Activated naive CD4-positive, alpha-beta T cell treated with anti-CD3 and anti-CD28 coated beads, Interleukin-2, amount 10 ng/mL, durations not matched to agents 7 days and 5 days (primary cell): ENCODE measurements at regions of chr1 and their contacts with region 1.

Region 1: DNA sequence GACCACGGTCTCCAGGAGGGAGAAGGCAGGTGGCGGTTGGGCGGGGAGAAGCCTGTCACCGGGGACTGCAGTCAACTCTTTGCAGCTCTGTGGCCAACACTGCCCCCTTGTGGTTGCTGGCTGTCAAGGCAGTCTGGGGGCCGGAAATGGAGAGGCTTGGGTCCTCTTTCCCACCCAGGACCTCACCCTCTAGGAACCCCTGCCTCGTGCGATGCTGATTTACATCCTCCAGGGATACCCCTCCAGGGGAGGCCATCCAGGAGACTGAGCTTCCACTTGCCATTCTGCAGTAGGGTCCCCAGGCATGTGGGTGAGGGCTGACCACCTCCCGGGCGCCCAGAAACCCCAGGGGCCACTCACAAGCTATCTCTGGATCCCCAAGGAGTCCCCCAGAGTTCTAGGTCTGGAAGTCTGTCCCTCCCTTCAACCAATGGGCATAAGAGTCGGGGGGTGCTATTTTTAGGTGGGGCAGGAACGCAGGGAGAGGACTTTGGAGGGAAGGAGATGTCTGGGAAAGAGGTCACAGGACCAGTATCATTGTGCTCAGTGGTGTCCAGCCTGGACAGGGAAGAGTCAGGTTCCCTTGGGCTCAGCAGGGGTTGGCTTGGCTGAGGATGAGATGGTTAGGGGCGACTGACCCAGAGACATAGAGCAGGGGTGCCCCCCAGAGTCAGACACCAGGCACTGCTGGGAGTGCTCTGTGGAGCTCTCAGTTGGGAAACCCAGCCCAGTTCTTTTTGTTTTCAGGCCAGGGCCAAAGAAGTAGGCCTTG is 7.1 kb upstream of the GPR61 start:
- DNase-seq: peak; percentile 95
- H3K4me3 Mint-ChIP-seq: peak overlapping the region; percentile 53
- H3K27ac Mint-ChIP-seq: peak overlapping the region; percentile 95
- H3K4me1 Mint-ChIP-seq: peaks cover 39% of the 10 kb centered on the region
- H3K27me3 Mint-ChIP-seq: peaks cover 19% of the 10 kb centered on the region

Region 2: DNA sequence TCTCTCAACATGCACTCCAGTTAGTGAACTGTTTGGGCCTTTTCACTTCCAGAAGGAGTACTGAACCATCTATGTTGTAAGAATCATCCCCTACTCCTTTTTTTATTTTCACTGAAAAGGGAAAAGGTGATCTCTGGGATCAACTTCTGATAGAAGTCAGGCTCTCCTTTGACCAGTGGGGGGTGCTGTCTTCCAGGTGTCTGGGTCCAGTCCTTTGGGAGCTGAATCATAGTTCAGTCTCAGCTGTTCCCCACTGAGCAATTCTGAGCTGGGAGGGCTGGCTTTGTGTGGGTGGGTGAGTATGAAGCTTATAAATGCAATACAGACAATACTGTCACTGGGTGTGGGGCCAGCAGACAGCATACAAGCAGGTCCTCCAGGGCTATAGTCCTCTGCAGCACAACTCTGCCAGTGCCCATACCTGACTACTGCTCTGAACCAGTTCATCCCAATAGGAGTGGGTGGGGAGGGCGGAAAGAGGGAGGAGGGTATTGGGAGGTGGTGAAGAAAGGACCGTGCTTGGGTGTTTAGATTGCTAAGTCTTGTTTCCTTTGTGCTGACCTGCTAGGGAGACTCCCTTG is 331.3 kb before region 1 on chr1:
- CTCF ChIA-PET with region 1: interaction called, 11 read pairs
- DNase-seq: peak; percentile 62
- H3K4me3 Mint-ChIP-seq: no peak overlapping the region
- H3K27ac Mint-ChIP-seq: no peak overlapping the region
- H3K4me1 Mint-ChIP-seq: peaks cover 14% of the 10 kb centered on the region
- H3K27me3 Mint-ChIP-seq: peaks cover 16% of the 10 kb centered on the region

Region 3: GRCh38 chr1:109253484-109254141 is 278.9 kb before region 1 on chr1:
- CTCF ChIA-PET with region 1: interaction called, 10 read pairs
- DNase-seq: no peak
- H3K4me3 Mint-ChIP-seq: no peak overlapping the region
- H3K27ac Mint-ChIP-seq: no peak overlapping the region
- H3K4me1 Mint-ChIP-seq: peaks cover 5% of the 10 kb centered on the region
- H3K27me3 Mint-ChIP-seq: peaks cover 55% of the 10 kb centered on the region

Region 4: GRCh38 chr1:109277434-109278204 is 254.9 kb before region 1 on chr1:
- CTCF ChIA-PET with region 1: interaction called, 56 read pairs
- DNase-seq: peak; percentile 76
- H3K4me3 Mint-ChIP-seq: no peak overlapping the region
- H3K27ac Mint-ChIP-seq: peak overlapping the region; percentile 24
- H3K4me1 Mint-ChIP-seq: peaks cover 40% of the 10 kb centered on the region
- H3K27me3 Mint-ChIP-seq: peaks cover 4% of the 10 kb centered on the region

Region 5: DNA sequence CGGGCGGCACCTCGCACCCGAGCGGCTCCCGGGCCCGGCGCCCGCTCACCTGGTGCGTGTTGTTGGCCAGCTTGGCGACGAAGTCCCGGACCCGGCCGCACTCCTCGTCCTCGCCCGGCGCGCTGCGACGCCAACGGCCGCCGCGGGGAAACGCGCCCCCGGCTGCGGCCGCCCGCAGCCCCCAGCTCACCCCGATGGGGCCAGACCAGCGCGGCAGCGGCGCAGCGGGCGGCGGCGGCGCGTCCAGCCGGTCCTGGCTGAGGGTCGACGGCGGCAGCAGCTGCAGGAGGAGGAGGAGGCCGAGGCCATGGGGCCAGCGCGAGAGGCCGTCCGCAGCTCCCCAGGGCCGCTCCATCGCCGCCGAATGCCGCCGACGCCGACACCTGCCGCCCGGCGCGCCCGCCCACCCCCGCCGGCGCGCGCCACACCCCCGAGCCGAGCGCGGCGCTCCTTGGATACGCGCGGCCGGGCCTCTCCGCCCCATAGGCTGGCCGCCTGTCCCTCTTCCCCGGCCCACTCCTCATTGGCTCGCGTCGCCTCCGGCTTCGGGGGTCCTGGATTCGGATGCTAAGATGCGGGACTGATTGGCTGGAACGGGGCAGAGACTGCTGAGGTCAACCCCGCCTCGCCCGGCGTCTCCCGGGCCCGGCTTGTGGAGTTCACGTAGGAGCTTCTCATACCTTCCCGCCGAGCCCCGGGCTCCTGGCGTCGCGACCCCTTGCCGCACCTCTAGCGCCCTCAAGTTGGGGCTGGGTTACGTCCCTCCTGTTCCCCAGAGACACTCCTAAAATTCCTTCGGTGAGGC is 134.8 kb before region 1 on chr1 and contains the start of gene SORT1:
- CTCF ChIA-PET with region 1: interaction called, 43 read pairs
- DNase-seq: peak; percentile 67
- H3K4me3 Mint-ChIP-seq: peak within 1 kb of the TSS; percentile 77
- H3K27ac Mint-ChIP-seq: no peak within 1 kb of the TSS
- H3K4me1 Mint-ChIP-seq: peaks cover 17% of the 10 kb centered on the region
- H3K27me3 Mint-ChIP-seq: peaks cover 38% of the 10 kb centered on the region

Region 6: DNA sequence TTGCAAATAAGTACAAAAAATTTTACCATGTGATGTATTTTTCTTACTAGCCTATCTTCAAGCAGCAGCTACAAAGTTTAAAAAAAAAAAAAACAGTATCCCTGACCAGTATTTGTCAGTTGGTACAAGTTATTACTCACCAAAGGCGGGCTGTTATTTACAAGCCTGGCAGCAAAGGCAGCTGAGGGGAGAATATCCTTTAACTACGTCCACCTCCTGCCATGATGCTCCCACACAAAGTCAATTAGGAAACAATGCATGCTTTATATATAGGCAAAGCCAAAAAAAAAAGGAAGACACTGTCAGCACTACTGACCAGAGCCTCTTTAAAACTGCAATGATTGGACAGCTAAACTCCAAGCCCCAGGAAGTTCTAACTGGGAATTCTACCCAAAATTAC is 120.0 kb before region 1 on chr1:
- CTCF ChIA-PET with region 1: no interaction called
- DNase-seq: no peak
- H3K4me3 Mint-ChIP-seq: no peak overlapping the region
- H3K27ac Mint-ChIP-seq: no peak overlapping the region
- H3K4me1 Mint-ChIP-seq: peaks cover 6% of the 10 kb centered on the region
- H3K27me3 Mint-ChIP-seq: no peaks in the 10 kb centered on the region

Region 7: DNA sequence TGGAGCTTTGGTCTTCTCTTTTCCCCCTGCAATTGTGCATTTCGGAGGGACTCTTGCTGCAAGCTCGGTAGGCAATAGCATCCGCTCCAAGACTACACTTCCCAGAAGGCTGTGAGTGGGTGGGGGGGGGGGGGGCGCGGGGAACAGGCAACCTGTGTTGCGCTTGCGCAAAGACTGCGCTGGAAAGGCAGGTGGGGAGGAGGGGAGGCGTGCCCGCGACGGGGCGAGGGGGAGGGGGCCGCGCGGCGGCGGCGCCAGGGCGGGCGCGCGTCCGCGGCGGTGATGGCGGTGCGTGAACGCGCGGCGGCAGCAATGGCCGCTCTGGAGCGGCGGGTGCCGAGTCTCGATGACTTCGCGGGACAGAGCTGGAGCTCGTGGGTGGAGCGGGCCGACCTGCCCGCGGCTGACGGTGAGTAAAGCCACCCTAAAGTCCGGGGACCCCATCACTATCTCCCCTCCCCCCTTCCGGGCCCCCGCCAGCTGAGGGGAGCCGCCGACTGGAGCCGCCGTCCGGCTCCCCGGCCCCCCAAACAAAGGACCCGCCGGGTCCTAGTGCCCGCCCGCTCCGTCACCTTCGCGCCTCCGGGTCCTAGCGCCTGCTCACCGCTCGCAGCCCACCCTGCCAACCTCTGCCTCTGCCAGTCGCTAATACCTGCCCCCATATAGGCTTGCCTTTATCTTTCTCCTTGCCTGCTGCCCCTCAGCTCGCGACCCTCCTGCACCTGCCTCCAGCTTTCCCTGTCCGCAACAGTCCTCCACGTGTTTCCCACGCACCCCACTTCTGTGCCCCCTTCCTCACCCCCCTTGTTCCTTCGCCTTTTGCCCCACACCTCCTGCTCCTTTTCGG is 48.7 kb before region 1 on chr1 and contains the start of gene ATXN7L2:
- CTCF ChIA-PET with region 1: interaction called, 1,080 read pairs
- DNase-seq: peak; percentile 93
- H3K4me3 Mint-ChIP-seq: peak within 1 kb of the TSS; percentile 92
- H3K27ac Mint-ChIP-seq: peak within 1 kb of the TSS; percentile 82
- H3K4me1 Mint-ChIP-seq: peaks cover 38% of the 10 kb centered on the region
- H3K27me3 Mint-ChIP-seq: peaks cover 40% of the 10 kb centered on the region

Region 8: DNA sequence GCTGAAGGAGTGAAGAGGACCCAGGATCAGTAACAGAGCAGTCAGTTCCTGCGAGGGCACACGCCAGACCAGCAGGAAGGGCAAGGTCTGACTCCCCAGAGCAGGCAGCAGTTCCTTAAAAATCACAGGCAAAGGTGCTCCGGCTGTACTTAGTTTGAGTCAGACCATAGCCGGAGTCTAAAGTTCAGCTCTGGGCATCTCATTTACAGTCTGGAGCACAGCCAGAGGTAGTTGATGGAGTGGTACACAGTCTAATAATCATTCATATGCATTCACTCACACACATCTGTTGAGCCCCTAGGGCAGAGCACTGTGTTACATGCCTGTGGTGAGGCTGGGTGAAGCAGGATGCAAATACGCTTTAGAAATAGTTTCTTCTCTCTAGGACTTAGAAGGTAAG is 15.7 kb before region 1 on chr1:
- CTCF ChIA-PET with region 1: interaction called, 1,080 read pairs
- DNase-seq: no peak
- H3K4me3 Mint-ChIP-seq: no peak overlapping the region
- H3K27ac Mint-ChIP-seq: no peak overlapping the region
- H3K4me1 Mint-ChIP-seq: peaks cover 8% of the 10 kb centered on the region
- H3K27me3 Mint-ChIP-seq: peaks cover 23% of the 10 kb centered on the region